ENCODE measurements at regions of chr15 and their contacts with region 1.

Region 1: GRCh38 chr15:31391687-31392671 is 65.3 kb downstream of the KLF13 start:
- DNase-seq: peak; percentile 78
- ATAC-seq: peak; percentile 91
- H3K4me3 Mint-ChIP-seq: peak overlapping the region; percentile 87
- H3K27ac Mint-ChIP-seq: peak overlapping the region; percentile 35
- H3K4me1 Mint-ChIP-seq: peaks cover 13% of the 10 kb centered on the region
- H3K27me3 Mint-ChIP-seq: no peaks in the 10 kb centered on the region
- CTCF ChIP-seq: no peak

Region 2: DNA sequence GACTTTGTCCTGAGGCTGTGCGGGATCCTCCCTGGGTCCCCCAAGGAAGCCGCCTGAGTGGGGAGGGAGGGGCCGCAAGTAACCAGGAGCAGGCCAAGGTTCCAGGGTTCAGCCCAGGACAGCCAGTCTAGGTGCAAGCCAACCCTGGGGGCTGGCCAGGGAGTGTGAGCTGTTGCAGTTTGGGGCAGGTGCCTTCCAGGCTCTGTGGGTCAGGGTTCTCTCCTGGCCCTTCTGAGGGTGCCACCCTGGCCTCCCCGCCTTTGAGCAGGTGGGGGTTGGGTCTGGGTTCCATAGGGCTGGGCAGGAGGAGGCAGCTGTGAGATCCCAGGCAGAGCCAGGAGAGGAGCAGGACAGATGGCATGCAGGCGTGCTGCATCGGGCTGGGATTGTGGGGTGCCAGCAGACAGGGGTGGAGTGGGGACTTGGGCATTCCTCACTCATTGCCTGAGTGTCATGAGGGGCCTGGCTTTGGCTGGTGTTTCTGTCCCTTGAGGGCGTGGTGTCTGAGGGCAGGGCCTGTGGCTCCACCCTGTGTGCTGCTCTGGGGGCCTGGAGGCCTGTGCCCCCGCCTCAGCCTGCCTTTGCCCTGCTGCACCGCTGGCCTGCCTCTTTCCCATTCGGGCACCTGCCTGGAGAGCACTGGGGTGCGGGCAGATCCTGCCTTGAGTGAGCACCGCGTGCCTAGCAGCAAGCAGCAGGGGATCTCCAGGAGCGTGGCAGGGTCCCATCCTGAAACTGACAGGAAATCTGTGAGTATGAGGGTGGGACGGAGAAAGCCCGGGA is 47.0 kb before region 1 on chr15:
- CTCF ChIA-PET with region 1: no interaction called
- POLR2A ChIA-PET with region 1: no interaction called
- intact Hi-C with region 1: loop called (anchors 5 kb)
- DNase-seq: peak; percentile 41
- ATAC-seq: peak; percentile 67
- H3K4me3 Mint-ChIP-seq: peak overlapping the region; percentile 88
- H3K27ac Mint-ChIP-seq: peak overlapping the region; percentile 91
- H3K4me1 Mint-ChIP-seq: peaks cover 100% of the 10 kb centered on the region
- H3K27me3 Mint-ChIP-seq: no peaks in the 10 kb centered on the region
- CTCF ChIP-seq: no peak

Region 3: DNA sequence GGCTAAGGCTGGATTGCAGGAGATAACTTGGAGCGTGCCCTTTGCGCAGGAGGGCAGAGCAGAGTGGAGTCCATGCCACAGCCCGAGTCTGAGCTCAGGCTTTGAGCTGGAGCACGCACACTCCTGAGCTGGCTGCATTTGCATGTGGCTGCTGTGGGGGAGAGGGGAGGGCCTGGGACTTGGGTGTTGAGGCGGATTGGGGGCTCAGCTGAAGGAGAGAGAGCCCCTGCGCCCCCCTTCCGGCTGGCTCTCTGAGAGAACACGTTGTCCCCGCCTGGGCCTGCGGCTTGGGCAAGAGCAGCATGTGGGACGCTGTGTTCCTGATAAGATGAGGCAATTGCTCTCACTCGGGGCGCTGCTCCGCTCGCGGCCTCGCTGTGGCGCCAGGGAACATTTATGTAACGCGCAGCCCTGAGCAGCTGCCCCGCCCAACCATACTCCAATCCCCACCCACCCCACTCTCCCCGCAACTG is 26.3 kb before region 1 on chr15:
- CTCF ChIA-PET with region 1: interaction called, 5 read pairs
- POLR2A ChIA-PET with region 1: interaction called, 3 read pairs
- intact Hi-C with region 1: loop called (anchors 2 kb)
- DNase-seq: peak; percentile 48
- ATAC-seq: peak; percentile 48
- H3K4me3 Mint-ChIP-seq: peak overlapping the region; percentile 67
- H3K27ac Mint-ChIP-seq: peak overlapping the region; percentile 66
- H3K4me1 Mint-ChIP-seq: peaks cover 99% of the 10 kb centered on the region
- H3K27me3 Mint-ChIP-seq: no peaks in the 10 kb centered on the region
- CTCF ChIP-seq: no peak

Region 4: DNA sequence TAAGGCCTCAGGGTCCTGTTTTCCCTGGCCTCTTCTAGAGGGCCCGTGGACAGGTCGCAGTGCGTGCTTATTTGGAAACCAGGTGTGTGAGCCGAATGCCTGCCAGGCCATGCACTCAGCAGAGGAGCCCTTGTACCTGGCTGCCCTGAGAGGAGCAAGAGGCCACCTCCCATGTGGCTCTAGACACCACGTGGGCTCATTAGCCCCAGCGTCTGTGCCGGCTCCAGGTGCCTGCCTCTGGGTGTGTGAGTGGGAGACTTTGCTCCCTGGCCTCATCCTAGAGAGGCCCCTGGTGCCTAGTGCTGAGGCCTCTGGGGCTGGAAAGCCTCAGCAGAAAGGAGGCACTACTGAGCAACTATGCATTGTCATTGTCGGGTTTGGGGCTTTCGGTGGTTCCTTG is 14.9 kb before region 1 on chr15:
- CTCF ChIA-PET with region 1: no interaction called
- POLR2A ChIA-PET with region 1: no interaction called
- intact Hi-C with region 1: no loop called
- DNase-seq: no peak
- ATAC-seq: no peak
- H3K4me3 Mint-ChIP-seq: no peak overlapping the region
- H3K27ac Mint-ChIP-seq: no peak overlapping the region
- H3K4me1 Mint-ChIP-seq: peaks cover 46% of the 10 kb centered on the region
- H3K27me3 Mint-ChIP-seq: no peaks in the 10 kb centered on the region
- CTCF ChIP-seq: no peak

Region 5: DNA sequence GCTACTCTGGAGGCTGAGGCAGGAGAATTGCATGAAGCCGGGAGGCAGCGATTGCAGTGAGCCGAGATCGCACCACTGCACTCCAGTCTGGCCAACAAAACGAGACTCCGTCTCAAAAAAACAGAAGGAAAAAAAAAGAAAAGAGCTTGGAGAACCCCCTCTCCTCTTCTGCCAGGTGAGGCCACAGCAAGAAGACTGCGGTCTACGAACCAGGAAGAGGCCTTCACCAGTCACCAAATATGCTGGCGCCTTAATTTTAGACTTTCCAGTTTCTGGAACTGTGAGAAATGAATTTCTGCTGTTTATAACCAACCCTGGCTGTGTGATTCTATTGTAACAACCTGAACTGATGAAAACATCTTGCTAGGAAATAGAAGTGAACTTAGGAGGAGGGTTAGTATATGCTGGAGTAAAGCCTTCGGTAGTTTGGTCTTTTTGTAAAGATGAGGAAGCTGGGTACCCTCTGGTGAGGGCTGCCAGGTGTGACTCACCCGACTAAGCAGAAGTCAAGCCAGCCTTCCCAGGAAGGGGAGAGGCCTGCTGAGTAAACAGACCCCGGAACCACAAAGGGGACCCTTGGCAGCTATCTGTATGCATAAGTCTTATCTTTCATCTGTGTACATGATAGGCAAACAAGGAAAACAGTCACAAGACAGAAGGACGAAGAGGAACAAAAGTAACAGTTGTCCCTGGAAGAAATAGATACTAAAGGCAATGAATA is 13.4 kb after region 1 on chr15:
- CTCF ChIA-PET with region 1: no interaction called
- POLR2A ChIA-PET with region 1: interaction called, 5 read pairs
- intact Hi-C with region 1: loop called (anchors 2 kb)
- DNase-seq: no peak
- ATAC-seq: peak; percentile 80
- H3K4me3 Mint-ChIP-seq: no peak overlapping the region
- H3K27ac Mint-ChIP-seq: peak overlapping the region; percentile 69
- H3K4me1 Mint-ChIP-seq: peaks cover 18% of the 10 kb centered on the region
- H3K27me3 Mint-ChIP-seq: peaks cover 6% of the 10 kb centered on the region
- CTCF ChIP-seq: no peak

Region 6: GRCh38 chr15:31472636-31473384 is 80.8 kb after region 1 on chr15:
- CTCF ChIA-PET with region 1: no interaction called
- POLR2A ChIA-PET with region 1: interaction called, 7 read pairs
- intact Hi-C with region 1: loop called (anchors 1 kb)
- DNase-seq: no peak
- ATAC-seq: peak; percentile 80
- H3K4me3 Mint-ChIP-seq: peak overlapping the region; percentile 80
- H3K27ac Mint-ChIP-seq: peak overlapping the region; percentile 93
- H3K4me1 Mint-ChIP-seq: peaks cover 45% of the 10 kb centered on the region
- H3K27me3 Mint-ChIP-seq: no peaks in the 10 kb centered on the region
- CTCF ChIP-seq: no peak

Measured in activated B cell treated with CpG ODN at 0.5 μM for 24 hours (primary cell).